Common myeloid progenitor, CD34-positive (primary cell): ENCODE measurements at regions of chr16 and their contacts with region 1.

Region 1: DNA sequence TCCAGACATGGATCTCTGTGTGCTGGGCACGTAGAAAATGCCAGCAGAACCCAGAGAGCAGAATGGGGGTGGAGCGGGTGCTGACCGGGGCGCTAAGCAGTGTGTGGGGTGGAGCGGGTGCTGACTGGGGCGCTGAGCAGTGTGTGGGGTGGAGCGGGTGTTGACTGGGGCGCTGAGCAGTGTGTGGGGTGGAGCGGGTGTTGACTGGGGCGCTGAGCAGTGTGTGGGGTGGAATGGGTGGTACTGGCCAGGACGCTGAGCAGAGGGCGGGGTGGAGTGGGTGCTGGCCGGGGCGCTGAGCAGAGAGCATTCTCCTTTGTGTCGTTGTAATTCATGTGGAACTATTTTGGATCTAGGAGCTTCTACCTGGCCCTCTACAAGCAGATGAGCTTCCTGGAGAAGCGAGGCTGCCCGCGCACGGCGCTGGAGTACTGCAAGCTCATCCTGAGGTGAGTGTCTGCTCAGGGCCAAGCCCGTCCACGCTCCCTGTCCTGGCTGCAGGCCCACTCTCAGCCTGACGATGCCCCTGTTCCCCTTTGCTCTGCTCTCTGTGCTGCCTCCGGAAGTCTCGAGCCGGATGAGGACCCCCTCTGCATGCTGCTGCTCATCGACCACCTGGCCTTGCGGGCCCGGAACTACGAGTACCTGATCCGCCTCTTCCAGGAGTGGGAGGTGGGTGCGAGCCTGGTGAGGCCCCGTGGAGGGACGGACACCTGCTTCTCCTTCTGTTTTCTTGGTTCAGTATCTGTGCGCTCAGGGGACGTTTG is 20.3 kb upstream of the MC1R start:
- DNase-seq: no peak
- H3K4me3 ChIP-seq: no peak overlapping the region
- H3K27ac ChIP-seq: no peak overlapping the region
- H3K4me1 ChIP-seq: no peaks in the 10 kb centered on the region
- H3K27me3 ChIP-seq: no peaks in the 10 kb centered on the region

Region 2: DNA sequence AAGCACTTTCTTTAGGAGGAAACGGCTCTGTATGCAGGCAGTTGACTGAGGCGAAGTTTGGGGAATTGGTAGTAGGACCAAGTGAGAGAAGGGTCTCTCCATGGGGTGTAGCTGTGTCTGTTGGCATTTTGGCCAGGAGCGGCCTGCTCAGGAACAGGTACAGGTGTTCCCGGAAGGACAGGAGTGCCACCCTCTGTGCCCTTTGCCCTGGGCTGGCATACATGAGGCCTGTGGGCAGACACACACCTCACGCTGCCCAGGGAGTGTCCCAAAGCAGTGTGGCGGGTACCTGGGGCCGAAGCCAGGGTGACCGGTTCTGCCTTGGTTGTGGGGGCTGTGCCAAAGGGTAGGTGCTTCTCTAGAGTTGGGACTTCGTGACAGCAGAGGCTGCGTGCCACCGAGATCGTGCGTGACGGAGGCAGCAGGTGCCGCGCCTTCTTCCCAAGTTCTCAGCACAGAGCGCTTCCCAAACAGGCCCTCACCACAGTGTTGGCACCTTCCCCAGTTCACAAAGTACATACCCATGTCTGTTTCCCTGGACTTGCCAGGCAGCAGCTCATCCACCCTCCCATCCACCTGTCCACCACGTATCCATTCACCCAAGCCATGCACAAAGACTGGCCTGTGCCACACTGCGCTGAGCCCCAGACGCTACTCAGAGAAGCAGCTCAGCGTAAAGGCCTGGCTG is 44.9 kb before region 1 on chr16:
- CTCF ChIA-PET with region 1: no interaction called
- POLR2A ChIA-PET with region 1: no interaction called
- DNase-seq: no peak
- H3K4me3 ChIP-seq: no peak overlapping the region
- H3K27ac ChIP-seq: no peak overlapping the region
- H3K4me1 ChIP-seq: no peaks in the 10 kb centered on the region
- H3K27me3 ChIP-seq: no peaks in the 10 kb centered on the region

Region 3: GRCh38 chr16:89909777-89910716 is 11.7 kb after region 1 on chr16:
- CTCF ChIA-PET with region 1: interaction called, 11 read pairs
- POLR2A ChIA-PET with region 1: no interaction called
- DNase-seq: peak; percentile 60 to 73 (median 69)
- H3K4me3 ChIP-seq: no peak overlapping the region
- H3K27ac ChIP-seq: no peak overlapping the region
- H3K4me1 ChIP-seq: peaks cover 0 to 5% (median under 1%) of the 10 kb centered on the region in 4 experiments
- H3K27me3 ChIP-seq: no peaks in the 10 kb centered on the region